ENCODE measurements at regions of chr3 and their contacts with region 1.

Region 1: DNA sequence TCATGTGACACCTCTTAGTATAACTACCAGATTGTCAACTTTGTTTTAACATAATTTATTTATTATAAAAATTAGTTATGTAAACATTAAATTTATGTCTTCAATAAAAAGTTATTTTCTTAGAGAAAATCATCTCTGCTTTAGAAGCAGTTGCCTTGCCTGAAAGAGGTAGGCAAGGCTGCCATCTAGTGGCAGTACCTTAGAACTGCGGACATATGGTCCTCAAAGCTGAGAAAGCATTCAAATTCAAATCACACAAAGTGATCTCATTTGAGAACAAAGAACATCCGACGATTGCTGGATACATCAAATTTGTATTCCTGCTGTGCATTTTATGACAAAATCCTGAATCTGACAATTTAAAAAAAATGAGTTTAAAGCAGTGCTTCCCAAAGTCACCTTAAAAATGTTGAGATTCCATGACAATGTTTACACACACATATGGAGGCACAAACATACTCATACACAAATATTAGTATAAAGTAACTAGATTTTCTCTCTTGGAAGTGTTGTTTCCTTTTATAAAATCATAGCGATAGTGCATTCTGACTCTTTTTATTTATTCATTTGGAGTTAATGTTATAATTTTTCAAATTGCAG is 617.4 kb downstream of the CADM2 start:
- DNase-seq: peak; percentile 49
- ATAC-seq: peak; percentile 45

Region 2: DNA sequence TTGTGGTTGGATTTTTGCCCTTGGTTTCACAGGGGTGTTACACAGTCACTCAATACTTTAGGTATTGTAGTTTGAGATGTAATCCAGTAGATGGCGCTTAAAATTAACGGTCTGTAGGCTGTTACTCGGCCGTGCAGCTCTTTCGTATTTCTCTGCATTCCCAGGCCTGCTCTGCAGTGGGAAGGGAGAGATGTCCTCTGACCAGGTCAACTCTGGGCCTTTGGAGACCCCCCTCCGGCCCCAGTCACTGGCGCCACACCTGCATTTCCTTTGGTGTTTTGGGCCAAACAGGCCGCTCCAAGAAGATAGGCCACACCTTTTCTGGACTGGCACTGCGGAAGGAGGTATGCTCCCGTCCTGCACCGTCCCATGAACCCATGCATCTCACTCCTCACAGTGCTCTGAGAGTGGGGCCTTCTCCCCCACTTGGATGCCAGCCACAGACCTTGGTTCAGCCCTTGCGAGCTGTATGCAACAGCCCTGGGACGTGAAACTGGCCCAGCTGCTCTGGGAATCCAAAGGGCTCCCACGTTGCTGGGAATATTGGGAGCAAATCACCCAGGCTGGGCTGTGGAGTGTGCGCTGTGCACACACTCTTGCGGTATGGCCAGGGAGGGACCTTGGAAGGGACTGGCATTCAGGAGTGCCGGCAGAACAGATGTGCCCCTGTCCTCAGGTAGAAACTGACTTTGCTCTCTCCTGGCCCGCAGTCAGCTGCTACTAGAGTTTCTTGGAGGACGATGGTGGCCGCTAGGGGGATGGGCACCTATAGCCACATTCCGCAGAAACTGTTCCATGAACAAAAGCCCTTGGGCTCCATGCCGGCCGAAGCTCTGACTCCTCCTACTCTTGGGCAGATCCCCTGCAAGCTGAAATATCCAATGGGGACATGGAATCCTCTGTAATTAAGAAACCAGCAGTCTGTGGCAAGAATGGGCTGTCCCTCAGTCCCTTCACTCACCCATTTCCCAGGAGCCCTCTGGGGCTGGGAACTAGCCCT is 1027.9 kb before region 1 on chr3:
- intact Hi-C with region 1: loop called (anchors 10 kb)
- DNase-seq: peak; percentile 44
- ATAC-seq: peak; percentile 87